ENCODE measurements at regions of chr2 and their contacts with region 1.

Region 1: GRCh38 chr2:223439184-223439583 is 163.0 kb downstream of the SCG2 start:
- DNase-seq: no peak
- H3K4me3 ChIP-seq: no peak overlapping the region
- H3K27ac ChIP-seq: no peak overlapping the region
- H3K4me1 ChIP-seq: no peaks in the 10 kb centered on the region
- H3K27me3 ChIP-seq: no peaks in the 10 kb centered on the region
- CTCF ChIP-seq: no peak
- POLR2A ChIP-seq: no peak

Region 2: GRCh38 chr2:222448748-222449181 is 990.4 kb before region 1 on chr2:
- intact Hi-C with region 1: loop called (anchors 5 kb)
- DNase-seq: no peak
- H3K4me3 ChIP-seq: no peak overlapping the region
- H3K27ac ChIP-seq: no peak overlapping the region
- H3K4me1 ChIP-seq: no peaks in the 10 kb centered on the region
- H3K27me3 ChIP-seq: no peaks in the 10 kb centered on the region
- CTCF ChIP-seq: no peak
- POLR2A ChIP-seq: no peak